ENCODE measurements at regions of chr12 and their contacts with region 1.

Region 1: GRCh38 chr12:18919871-18920511 is 182.1 kb downstream of the CAPZA3 start:
- DNase-seq: no peak
- H3K4me3 ChIP-seq: no peak overlapping the region
- H3K27ac ChIP-seq: no peak overlapping the region
- H3K4me1 ChIP-seq: no peaks in the 10 kb centered on the region
- H3K27me3 ChIP-seq: no peaks in the 10 kb centered on the region
- CTCF ChIP-seq: no peak
- POLR2A ChIP-seq: no peak

Region 2: GRCh38 chr12:18946106-18946505 is 26.1 kb after region 1 on chr12:
- intact Hi-C with region 1: loop called (anchors 2 kb)
- DNase-seq: no peak
- H3K4me3 ChIP-seq: no peak overlapping the region
- H3K27ac ChIP-seq: no peak overlapping the region
- H3K4me1 ChIP-seq: no peaks in the 10 kb centered on the region
- H3K27me3 ChIP-seq: no peaks in the 10 kb centered on the region
- CTCF ChIP-seq: no peak
- POLR2A ChIP-seq: no peak

Region 3: GRCh38 chr12:18990856-18991255 is 70.9 kb after region 1 on chr12:
- intact Hi-C with region 1: no loop called
- DNase-seq: no peak
- H3K4me3 ChIP-seq: no peak overlapping the region
- H3K27ac ChIP-seq: no peak overlapping the region
- H3K4me1 ChIP-seq: no peaks in the 10 kb centered on the region
- H3K27me3 ChIP-seq: no peaks in the 10 kb centered on the region
- CTCF ChIP-seq: no peak
- POLR2A ChIP-seq: no peak

Region 4: DNA sequence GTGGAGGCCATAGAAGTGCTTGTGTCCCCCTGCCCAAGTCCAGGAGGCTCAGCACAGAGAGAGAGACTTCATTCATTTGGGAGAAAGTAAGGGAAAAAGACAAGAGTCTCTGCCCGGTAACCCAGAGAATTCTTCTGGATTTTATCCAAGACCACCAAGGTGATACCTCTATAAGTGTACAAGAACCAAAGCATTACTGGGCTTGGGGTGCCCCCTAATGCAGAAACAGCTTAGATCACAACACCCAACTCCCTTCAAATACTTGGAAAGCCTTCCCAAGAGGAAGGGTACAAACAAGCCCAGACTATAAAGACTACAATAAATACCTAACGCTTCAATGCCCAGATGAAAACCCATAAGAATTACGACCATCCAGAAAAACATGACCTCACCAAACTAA is 1328.7 kb after region 1 on chr12:
- intact Hi-C with region 1: no loop called
- DNase-seq: no peak
- H3K4me3 ChIP-seq: no peak overlapping the region
- H3K27ac ChIP-seq: no peak overlapping the region
- H3K4me1 ChIP-seq: no peaks in the 10 kb centered on the region
- H3K27me3 ChIP-seq: no peaks in the 10 kb centered on the region
- CTCF ChIP-seq: no peak
- POLR2A ChIP-seq: no peak